H1 (cell line): ENCODE measurements at regions of chr2 and their contacts with region 1.

Region 1: DNA sequence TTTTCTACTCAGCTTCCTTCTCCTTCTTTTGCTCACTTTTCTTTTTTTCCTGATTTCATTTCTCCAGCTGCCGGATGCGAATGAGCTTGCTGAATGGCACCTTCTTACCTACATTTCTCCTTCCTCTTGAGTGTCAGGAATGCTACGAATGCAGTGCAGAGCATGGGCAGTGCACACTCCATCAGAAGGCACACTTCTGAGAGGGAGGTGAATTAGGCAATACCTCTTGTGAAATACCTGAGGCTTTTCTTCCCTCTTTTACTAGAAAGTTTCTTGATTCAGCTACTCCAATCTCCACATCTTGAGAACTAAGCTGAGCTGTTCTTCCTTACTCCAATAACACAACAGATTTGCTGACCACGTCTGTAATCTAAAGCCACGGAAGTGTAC is 51.1 kb downstream of the PLEKHM3 start:
- DNase-seq: no peak
- H3K4me3 ChIP-seq: no peak overlapping the region
- H3K27ac ChIP-seq: no peak overlapping the region
- H3K4me1 ChIP-seq: peaks cover 3 to 28% (median 9%) of the 10 kb centered on the region in 4 experiments; a peak in 5 of 7 replicates
- H3K27me3 ChIP-seq: no peaks in the 10 kb centered on the region
- CTCF ChIP-seq: no peak
- EP300 ChIP-seq: no peak
- POLR2A ChIP-seq: no peak
- RAD21 ChIP-seq: no peak

Region 2: DNA sequence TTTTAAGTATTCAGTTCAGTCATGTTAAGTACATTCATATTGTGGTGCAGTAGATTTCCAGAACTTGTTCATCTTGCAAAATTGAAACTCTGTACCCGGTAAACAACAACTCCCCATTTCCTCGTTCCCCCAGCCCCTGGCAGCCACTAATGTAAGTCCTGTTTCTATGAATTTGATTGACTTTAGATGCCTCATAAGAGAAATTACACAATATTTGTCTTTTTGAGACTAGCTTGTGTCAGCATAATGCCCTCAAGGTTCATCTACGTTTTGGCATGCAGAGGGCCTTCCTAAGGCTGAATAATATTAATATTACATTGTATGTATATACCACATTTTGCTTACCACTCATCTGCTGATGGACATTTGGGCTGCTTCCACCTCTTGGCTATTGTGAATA is 379.9 kb before region 1 on chr2:
- CTCF ChIA-PET with region 1: no interaction called
- POLR2A ChIA-PET with region 1: no interaction called
- DNase-seq: no peak
- H3K4me3 ChIP-seq: no peak overlapping the region
- H3K27ac ChIP-seq: no peak overlapping the region
- H3K4me1 ChIP-seq: no peaks in the 10 kb centered on the region
- H3K27me3 ChIP-seq: peaks cover 0 to 1% (median 0%) of the 10 kb centered on the region in 4 experiments; a peak in 1 of 7 replicates
- CTCF ChIP-seq: no peak
- EP300 ChIP-seq: no peak
- POLR2A ChIP-seq: no peak
- RAD21 ChIP-seq: no peak

Region 3: GRCh38 chr2:207769597-207770486 is 204.4 kb before region 1 on chr2 and contains the start of gene FZD5:
- CTCF ChIA-PET with region 1: interaction called, 68 read pairs
- POLR2A ChIA-PET with region 1: interaction called, 12 read pairs
- DNase-seq: peak; percentile 94 to 99
- H3K4me3 ChIP-seq: peak within 1 kb of the TSS; percentile 84 to 96 (median 86)
- H3K27ac ChIP-seq: peak within 1 kb of the TSS; percentile 24; the same call in 1 of the 2 replicates
- H3K4me1 ChIP-seq: peaks cover 0 to 32% (median 26%) of the 10 kb centered on the region in 4 experiments; a peak in 6 of 7 replicates
- H3K27me3 ChIP-seq: peaks cover 0 to 4% (median 1%) of the 10 kb centered on the region in 4 experiments; a peak in 1 of 7 replicates
- CTCF ChIP-seq: peak; percentile 17 to 27 (median 25); a peak in 3 of 4 replicates
- EP300 ChIP-seq: no peak
- POLR2A ChIP-seq: peak; percentile 73 to 89
- RAD21 ChIP-seq: peak; percentile 28 to 48; a peak in 3 of 4 replicates
- total RNA-seq, gene FZD5: 55.2 and 56.6 TPM in 2 replicates

Region 4: DNA sequence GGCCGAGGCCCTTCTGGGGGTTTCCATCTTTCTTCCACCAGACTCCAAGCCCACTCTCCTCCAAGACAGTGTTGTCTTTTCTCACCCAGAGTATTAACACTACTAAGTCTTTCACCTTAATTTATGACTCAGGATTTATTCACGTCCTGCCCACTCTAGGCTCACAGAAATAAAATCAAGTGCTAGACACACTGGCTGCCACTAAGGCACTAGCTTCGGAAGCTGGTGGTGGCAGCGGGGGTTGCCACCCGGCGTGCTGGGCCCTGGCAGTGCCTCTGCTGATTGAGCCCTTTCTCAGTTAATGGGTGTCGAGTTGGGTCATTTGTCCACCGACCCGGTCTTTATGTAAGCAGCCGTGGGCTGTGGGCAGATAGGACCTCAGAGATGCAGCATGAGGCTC is 110.9 kb before region 1 on chr2:
- CTCF ChIA-PET with region 1: interaction called, 14 read pairs
- POLR2A ChIA-PET with region 1: no interaction called
- DNase-seq: no peak
- H3K4me3 ChIP-seq: no peak overlapping the region
- H3K27ac ChIP-seq: no peak overlapping the region
- H3K4me1 ChIP-seq: no peaks in the 10 kb centered on the region
- H3K27me3 ChIP-seq: no peaks in the 10 kb centered on the region
- CTCF ChIP-seq: no peak
- EP300 ChIP-seq: no peak
- POLR2A ChIP-seq: no peak
- RAD21 ChIP-seq: no peak

Region 5: GRCh38 chr2:207920321-207920720 is 53.9 kb before region 1 on chr2:
- CTCF ChIA-PET with region 1: interaction called, 10 read pairs
- POLR2A ChIA-PET with region 1: no interaction called
- DNase-seq: no peak
- H3K4me3 ChIP-seq: no peak overlapping the region
- H3K27ac ChIP-seq: no peak overlapping the region
- H3K4me1 ChIP-seq: peaks cover 0 to 4% (median 0%) of the 10 kb centered on the region in 4 experiments; a peak in 1 of 7 replicates
- H3K27me3 ChIP-seq: no peaks in the 10 kb centered on the region; a peak in 1 of 7 replicates
- CTCF ChIP-seq: no peak
- EP300 ChIP-seq: no peak
- POLR2A ChIP-seq: no peak
- RAD21 ChIP-seq: no peak

Region 6: DNA sequence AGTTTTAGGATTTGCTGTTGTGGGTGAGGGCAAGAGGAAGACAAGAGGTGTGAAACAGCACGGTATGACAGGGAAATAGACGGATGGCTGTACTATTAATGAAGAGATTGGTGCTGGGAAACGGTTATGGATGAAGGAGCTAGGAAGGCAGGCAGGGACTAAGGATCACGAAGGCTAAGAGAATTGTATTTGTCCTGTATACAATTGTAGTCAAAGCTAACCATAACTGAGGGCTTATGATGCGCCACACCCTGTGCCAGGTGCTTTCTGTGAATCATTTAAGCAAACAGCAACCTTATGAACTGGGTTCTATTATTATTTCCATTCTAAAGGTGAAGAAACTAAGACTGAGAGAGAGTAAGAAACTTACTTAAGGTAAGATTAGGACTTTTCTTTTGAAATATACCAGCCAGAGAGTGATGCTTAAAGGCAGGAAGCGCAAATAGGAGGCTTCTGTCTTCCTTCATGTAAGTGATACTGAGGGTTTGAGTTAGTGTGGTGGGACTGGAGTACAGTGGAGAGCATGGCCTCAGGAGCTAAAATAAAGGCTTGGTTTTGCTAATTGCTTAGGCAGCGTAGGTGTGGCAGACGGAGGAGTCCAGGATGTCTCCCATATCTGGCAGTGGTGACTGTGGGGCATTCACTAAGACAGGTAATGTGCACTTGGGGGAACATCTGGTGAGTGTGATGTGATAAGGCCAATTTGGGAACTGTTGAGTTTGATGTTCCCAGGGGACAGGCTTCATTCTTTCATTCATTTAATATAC is 34.7 kb before region 1 on chr2:
- CTCF ChIA-PET with region 1: interaction called, 14 read pairs
- POLR2A ChIA-PET with region 1: no interaction called
- DNase-seq: no peak
- H3K4me3 ChIP-seq: no peak overlapping the region
- H3K27ac ChIP-seq: no peak overlapping the region
- H3K4me1 ChIP-seq: peaks cover 0 to 6% (median 2%) of the 10 kb centered on the region in 4 experiments; a peak in 3 of 7 replicates
- H3K27me3 ChIP-seq: no peaks in the 10 kb centered on the region
- CTCF ChIP-seq: no peak
- EP300 ChIP-seq: no peak
- POLR2A ChIP-seq: no peak
- RAD21 ChIP-seq: no peak

Region 7: DNA sequence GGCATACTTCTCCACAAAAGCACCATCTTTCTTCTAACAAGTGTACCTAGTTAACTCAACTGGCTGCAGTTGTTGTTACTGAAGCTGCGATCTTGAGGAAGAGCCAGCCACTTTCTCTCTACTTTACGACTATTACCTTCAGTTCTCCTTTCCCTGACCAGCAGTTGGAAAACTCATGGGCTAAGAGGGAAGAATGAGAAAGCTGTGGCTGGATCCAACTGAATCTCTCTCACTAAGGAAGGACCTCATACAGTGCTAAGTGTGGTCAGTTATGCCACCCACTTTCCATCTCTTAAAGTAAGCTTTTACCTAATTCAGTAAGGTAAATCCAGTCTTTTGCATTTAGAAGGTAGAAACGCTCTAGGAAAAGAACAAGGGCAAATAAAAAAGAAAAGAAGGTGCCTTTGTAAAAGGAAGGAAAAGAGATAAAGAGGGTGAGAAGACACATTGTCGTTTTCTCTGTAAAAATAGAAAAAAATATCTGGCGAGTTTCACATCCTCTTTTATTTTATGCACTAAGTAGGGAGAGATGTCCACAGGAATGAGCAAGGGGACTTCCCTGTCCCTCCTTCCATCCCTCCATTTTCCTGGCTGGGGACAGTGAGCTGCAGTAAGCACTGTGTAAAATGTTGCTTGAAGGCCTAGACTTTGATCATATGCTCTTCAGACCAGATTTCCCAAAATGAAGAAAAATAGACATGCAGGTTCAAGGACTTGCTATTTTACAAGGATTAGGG is 22.3 kb before region 1 on chr2:
- CTCF ChIA-PET with region 1: interaction called, 39 read pairs
- POLR2A ChIA-PET with region 1: no interaction called
- DNase-seq: no peak
- H3K4me3 ChIP-seq: no peak overlapping the region
- H3K27ac ChIP-seq: no peak overlapping the region
- H3K4me1 ChIP-seq: peaks cover 0 to 27% (median 16%) of the 10 kb centered on the region in 4 experiments; a peak in 4 of 7 replicates
- H3K27me3 ChIP-seq: no peaks in the 10 kb centered on the region
- CTCF ChIP-seq: no peak
- EP300 ChIP-seq: no peak
- POLR2A ChIP-seq: no peak
- RAD21 ChIP-seq: no peak

Region 8: DNA sequence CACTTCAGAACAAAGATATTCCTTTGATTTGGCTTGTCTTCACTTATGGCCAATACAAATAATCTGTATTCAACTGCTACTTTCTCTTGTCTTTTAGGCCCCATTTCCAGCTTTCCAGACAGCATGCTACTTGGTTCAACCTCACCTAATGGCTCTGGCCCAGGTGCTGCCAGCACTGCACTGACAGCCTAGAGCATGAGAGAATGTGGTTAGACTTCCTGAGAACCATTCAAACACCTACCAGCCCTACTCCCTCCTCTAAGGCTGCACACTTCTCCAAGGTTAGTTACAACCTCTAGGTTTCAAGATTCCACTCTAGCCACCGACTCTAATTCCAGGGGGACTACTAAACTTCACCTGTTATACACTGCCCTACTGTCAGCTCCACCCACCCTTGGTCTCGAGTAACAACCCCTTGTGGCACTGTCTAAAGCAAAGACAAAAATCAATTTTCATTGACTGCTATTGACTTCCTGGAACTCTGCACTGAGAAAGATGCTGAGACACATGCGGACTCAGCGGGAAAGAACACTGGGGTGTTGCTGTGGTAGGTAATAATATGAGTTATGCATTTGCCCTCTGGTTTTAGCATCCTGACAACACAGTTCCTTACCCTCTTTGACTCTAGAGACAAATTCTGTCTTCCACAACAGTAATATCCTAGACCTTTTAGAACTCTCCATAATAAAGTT is 13.0 kb after region 1 on chr2:
- CTCF ChIA-PET with region 1: interaction called, 30 read pairs
- POLR2A ChIA-PET with region 1: no interaction called
- DNase-seq: no peak
- H3K4me3 ChIP-seq: no peak overlapping the region
- H3K27ac ChIP-seq: no peak overlapping the region
- H3K4me1 ChIP-seq: no peaks in the 10 kb centered on the region
- H3K27me3 ChIP-seq: no peaks in the 10 kb centered on the region
- CTCF ChIP-seq: no peak
- EP300 ChIP-seq: no peak
- POLR2A ChIP-seq: no peak
- RAD21 ChIP-seq: no peak

Region 9: DNA sequence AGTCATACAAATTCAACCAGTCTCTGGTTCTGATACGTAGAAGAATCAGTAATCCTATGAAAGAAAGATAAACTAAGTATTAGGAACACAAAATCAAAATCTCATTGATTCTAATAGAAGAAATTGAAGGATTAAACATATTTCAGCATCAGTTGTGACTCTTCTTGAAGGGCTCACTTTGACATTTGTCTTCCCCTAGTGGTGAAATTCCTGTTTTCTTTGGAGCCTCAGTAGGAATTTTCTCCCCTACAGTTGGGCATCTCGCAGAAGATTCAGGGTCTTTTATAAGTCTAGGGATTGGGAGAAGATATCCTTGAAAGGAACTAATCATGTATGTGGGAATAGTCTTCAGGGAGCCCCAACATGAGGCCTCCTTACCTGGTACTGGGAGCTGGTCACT is 174.6 kb after region 1 on chr2:
- CTCF ChIA-PET with region 1: no interaction called
- POLR2A ChIA-PET with region 1: no interaction called
- DNase-seq: no peak
- H3K4me3 ChIP-seq: no peak overlapping the region
- H3K27ac ChIP-seq: no peak overlapping the region
- H3K4me1 ChIP-seq: 0 out of 7 replicates have a peak, but pooled peaks cover 0 to 3% (median 0%) of the 10 kb centered on the region in 4 experiments
- H3K27me3 ChIP-seq: no peaks in the 10 kb centered on the region; a peak in 1 of 7 replicates
- CTCF ChIP-seq: peak in 2 of 3 experiments; percentile 43 to 50; a peak in 2 of 4 replicates
- EP300 ChIP-seq: no peak
- POLR2A ChIP-seq: no peak
- RAD21 ChIP-seq: peak; percentile 33 to 43; a peak in 3 of 4 replicates